ENCODE measurements at regions of chr4 and their contacts with region 1.

Region 1: DNA sequence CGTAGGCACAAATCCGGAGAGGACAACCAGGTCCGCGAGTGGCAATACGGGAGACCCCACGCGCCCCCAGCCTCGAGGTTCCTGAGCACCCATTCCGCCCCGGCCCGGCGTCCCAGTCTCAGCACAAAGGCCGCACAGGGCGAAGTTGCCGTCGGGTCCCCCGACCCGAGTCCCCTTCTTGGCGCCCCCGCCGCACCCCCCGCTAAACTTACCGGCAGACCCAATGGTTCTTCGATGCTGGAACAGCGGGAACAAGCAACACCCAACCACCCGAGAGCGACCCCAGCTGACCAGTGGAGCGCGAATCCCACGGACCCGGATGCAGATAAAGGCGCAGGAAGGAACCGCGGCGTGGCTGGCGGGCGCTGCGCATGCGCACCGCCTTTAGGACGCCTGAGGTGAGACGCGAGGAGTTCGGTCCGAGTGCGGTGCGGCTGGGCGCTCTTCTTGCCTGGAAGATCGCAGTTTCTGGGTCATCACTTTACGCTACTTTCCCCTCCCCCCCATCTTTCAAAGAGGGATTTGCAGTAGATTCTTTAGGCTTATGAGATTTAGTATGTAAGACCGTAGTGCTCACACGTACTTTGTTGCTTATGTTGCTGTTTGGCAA is at the start of gene GNPDA2:
- DNase-seq: peak; percentile 75 to 90 (median 80)
- H3K4me3 ChIP-seq: peak within 1 kb of the TSS; percentile 93
- H3K4me3 Mint-ChIP-seq: peak within 1 kb of the TSS; percentile 83 to 96 (median 91)
- H3K27ac ChIP-seq: peak within 1 kb of the TSS; percentile 79
- H3K27ac Mint-ChIP-seq: peak within 1 kb of the TSS; percentile 77 to 97 (median 92)
- H3K4me1 ChIP-seq: peaks cover 15% of the 10 kb centered on the region
- H3K4me1 Mint-ChIP-seq: peaks cover 41 to 48% (median 46%) of the 10 kb centered on the region in 3 donors
- H3K27me3 ChIP-seq: no peaks in the 10 kb centered on the region
- H3K27me3 Mint-ChIP-seq: no peaks in the 10 kb centered on the region
- total RNA-seq, gene GNPDA2: 20.0 to 20.9 TPM

Region 2: GRCh38 chr4:44678094-44679041 is 48.0 kb before region 1 on chr4 and contains the start of gene GUF1:
- CTCF ChIA-PET with region 1: interaction called, 7 read pairs
- POLR2A ChIA-PET with region 1: interaction called, 29 read pairs
- DNase-seq: peak; percentile 76 to 92 (median 87)
- H3K4me3 ChIP-seq: peak within 1 kb of the TSS; percentile 89
- H3K4me3 Mint-ChIP-seq: peak within 1 kb of the TSS; percentile 95 to 99 (median 97)
- H3K27ac ChIP-seq: peak within 1 kb of the TSS; percentile 94
- H3K27ac Mint-ChIP-seq: peak within 1 kb of the TSS; percentile 98 to 100 (median 99)
- H3K4me1 ChIP-seq: peaks cover 27% of the 10 kb centered on the region
- H3K4me1 Mint-ChIP-seq: peaks cover 34 to 55% (median 50%) of the 10 kb centered on the region in 3 donors
- H3K27me3 ChIP-seq: no peaks in the 10 kb centered on the region
- H3K27me3 Mint-ChIP-seq: peaks cover 0 to 3% of the 10 kb centered on the region in 2 donors
- total RNA-seq, gene GUF1: 41.3 to 43.0 TPM

Region 3: DNA sequence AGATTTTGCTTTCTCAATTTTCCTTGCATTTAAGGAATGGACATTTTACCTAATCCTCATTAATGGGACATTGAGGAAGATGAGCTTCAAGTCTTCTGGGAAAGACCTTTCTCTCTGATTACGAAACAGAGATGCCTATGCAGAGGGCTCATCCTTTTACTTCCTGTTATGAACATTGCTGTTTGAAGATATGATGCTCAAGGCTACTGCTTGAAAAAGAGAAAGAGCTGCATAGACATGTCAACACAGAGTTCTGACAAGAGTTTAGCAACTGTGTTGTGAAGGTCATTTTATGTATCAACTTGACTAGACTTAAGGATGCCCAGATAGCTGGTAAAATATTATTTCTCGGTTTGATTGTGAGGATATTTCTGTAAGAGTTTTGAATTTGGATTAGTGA is 13.8 kb after region 1 on chr4:
- CTCF ChIA-PET with region 1: no interaction called
- POLR2A ChIA-PET with region 1: no interaction called
- DNase-seq: no peak
- H3K4me3 ChIP-seq: no peak overlapping the region
- H3K4me3 Mint-ChIP-seq: no peak overlapping the region
- H3K27ac ChIP-seq: no peak overlapping the region
- H3K27ac Mint-ChIP-seq: no peak overlapping the region
- H3K4me1 ChIP-seq: no peaks in the 10 kb centered on the region
- H3K4me1 Mint-ChIP-seq: no peaks in the 10 kb centered on the region
- H3K27me3 ChIP-seq: no peaks in the 10 kb centered on the region
- H3K27me3 Mint-ChIP-seq: peaks cover 11 to 28% of the 10 kb centered on the region in 2 donors

Region 4: GRCh38 chr4:44771789-44772188 is 45.4 kb after region 1 on chr4:
- CTCF ChIA-PET with region 1: no interaction called
- POLR2A ChIA-PET with region 1: no interaction called
- DNase-seq: no peak
- H3K4me3 ChIP-seq: no peak overlapping the region
- H3K4me3 Mint-ChIP-seq: no peak overlapping the region
- H3K27ac ChIP-seq: no peak overlapping the region
- H3K27ac Mint-ChIP-seq: no peak overlapping the region
- H3K4me1 ChIP-seq: no peaks in the 10 kb centered on the region
- H3K4me1 Mint-ChIP-seq: no peaks in the 10 kb centered on the region
- H3K27me3 ChIP-seq: no peaks in the 10 kb centered on the region
- H3K27me3 Mint-ChIP-seq: peaks cover 3 to 16% of the 10 kb centered on the region in 2 donors

Measured in CD8-positive, alpha-beta memory T cell (primary cell).